K562 (cell line): ENCODE measurements at regions of chr17 and their contacts with region 1.

Region 1: GRCh38 chr17:41322094-41322902 is 6.8 kb upstream of the KRTAP17-1 start:
- DNase-seq: peak; percentile 17 to 42 (median 30)
- ATAC-seq: peak; percentile 57; the same call in 2 of the 3 replicates
- H3K4me3 ChIP-seq: no peak overlapping the region
- H3K27ac ChIP-seq: no peak overlapping the region
- H3K4me1 ChIP-seq: no peaks in the 10 kb centered on the region
- H3K27me3 ChIP-seq: peaks cover 0 to 2% of the 10 kb centered on the region in 2 experiments; a peak in 2 of 5 replicates
- CTCF ChIP-seq: peak; percentile 45 to 70 (median 69); a peak in 5 of 6 replicates
- EP300 ChIP-seq: no peak
- POLR2A ChIP-seq: no peak
- RAD21 ChIP-seq: peak in 1 of 2 experiments; percentile 74; a peak in 3 of 4 replicates

Region 2: GRCh38 chr17:40803617-40804082 is 518.6 kb before region 1 on chr17:
- CTCF ChIA-PET with region 1: no interaction called
- POLR2A ChIA-PET with region 1: no interaction called
- in situ Hi-C with region 1: no loop called
- intact Hi-C with region 1: loop called (anchors 2 kb)
- DNase-seq: peak; percentile 85 to 88 (median 86)
- ATAC-seq: peak; percentile 98
- H3K4me3 ChIP-seq: no peak overlapping the region
- H3K27ac ChIP-seq: no peak overlapping the region
- H3K4me1 ChIP-seq: no peaks in the 10 kb centered on the region
- H3K27me3 ChIP-seq: peaks cover 3 to 14% of the 10 kb centered on the region in 2 experiments; a peak in 4 of 5 replicates
- CTCF ChIP-seq: peak; percentile 90 to 93 (median 93)
- EP300 ChIP-seq: no peak
- POLR2A ChIP-seq: no peak
- RAD21 ChIP-seq: peak; percentile 90 to 96